Ovary (tissue), 10 donors: ENCODE measurements at regions of chr4 and their contacts with region 1.

Region 1: DNA sequence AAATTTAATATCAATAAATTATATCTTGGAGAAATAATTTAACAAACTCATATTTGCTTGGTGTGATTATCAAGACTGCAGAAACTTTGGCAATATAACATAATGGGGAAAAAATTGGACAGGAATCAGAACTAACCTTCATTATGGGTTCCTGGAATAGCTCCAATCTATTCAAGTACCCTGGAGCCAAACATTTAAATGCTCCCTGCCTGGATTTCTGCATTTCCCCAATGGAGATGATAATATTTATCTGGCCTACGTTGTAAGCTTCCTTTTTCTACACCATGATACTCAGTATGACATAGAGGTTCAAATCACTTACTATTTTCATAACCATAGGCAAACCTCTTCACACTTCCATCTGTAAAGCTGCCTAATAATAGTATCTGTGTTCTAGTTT is 326.8 kb downstream of the TRIML1 start:
- DNase-seq: no peak
- H3K4me3 ChIP-seq: no peak overlapping the region
- H3K27ac ChIP-seq: no peak overlapping the region
- H3K4me1 ChIP-seq: no peaks in the 10 kb centered on the region
- H3K27me3 ChIP-seq: no peaks in the 10 kb centered on the region
- CTCF ChIP-seq: no peak
- EP300 ChIP-seq: no peak
- POLR2A ChIP-seq: no peak

Region 2: GRCh38 chr4:189845145-189845846 is 1379.3 kb after region 1 on chr4:
- intact Hi-C with region 1: loop called in 1 of 4 experiments (anchors 5 kb)
- DNase-seq: no peak
- H3K4me3 ChIP-seq: no peak overlapping the region
- H3K27ac ChIP-seq: no peak overlapping the region
- H3K4me1 ChIP-seq: no peaks in the 10 kb centered on the region
- H3K27me3 ChIP-seq: no peaks in the 10 kb centered on the region
- CTCF ChIP-seq: no peak
- EP300 ChIP-seq: no peak
- POLR2A ChIP-seq: no peak